SK-N-SH (cell line): ENCODE measurements at regions of chr1 and their contacts with region 1.

Region 1: DNA sequence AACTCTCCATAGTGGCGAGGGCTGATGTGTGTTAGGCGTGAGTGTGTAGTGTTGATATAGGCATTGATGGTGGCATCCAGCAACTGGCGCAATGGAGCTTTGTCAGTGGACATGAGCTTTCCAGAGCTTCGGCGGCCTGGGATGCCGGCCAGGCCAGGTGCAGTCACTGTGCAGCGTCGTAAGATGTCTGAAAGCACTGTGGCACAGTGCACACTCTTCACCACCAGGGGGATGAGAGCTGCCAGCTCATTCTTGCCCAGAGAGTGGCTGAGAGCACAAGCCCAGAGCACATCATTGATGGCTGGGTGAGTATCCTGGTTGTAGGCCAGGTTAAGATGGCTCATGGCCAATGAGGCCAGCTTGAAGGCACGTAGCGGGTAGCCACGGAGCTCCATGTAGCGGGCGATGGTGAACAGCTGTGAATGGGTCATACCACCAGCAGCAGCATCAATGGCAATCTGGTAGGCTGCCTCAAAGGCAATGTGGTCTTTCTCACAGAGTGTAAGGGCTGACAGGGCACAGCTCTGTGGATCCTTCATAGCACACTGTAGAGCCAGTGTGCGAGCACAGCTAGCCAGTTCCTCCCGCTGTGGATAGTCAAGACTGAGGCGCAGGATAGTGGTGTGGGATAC is 6.7 kb downstream of the UROD start:
- DNase-seq: peak; percentile 58
- H3K4me3 ChIP-seq: no peak overlapping the region
- H3K27ac ChIP-seq: no peak overlapping the region; a peak in 1 of 4 replicates
- H3K4me1 ChIP-seq: peaks cover 0 to 13% of the 10 kb centered on the region in 2 experiments; a peak in 1 of 4 replicates
- H3K27me3 ChIP-seq: no peaks in the 10 kb centered on the region
- CTCF ChIP-seq: peak; percentile 72
- EP300 ChIP-seq: no peak
- RAD21 ChIP-seq: peak; percentile 74

Region 2: DNA sequence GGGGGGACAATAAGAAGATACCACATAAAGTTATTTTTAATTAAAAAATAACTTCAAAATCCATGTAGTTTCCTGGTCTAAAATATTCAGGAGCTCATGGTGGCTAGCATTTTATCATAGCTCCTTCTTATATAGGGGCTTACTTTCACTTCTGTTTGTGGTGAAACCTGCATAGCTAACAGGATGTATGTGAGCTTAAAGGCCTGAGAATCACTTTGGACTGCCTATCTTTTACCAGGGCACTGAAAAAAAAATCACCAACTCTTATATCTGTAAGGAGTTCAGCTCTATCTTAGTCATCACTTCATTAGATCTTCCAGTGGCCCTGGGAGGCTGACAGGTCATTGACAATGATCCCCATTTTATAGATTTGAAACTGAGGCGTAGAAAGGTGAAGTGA is 14.6 kb after region 1 on chr1:
- CTCF ChIA-PET with region 1: interaction called, 11 read pairs
- POLR2A ChIA-PET with region 1: no interaction called
- DNase-seq: no peak
- H3K4me3 ChIP-seq: no peak overlapping the region
- H3K27ac ChIP-seq: no peak overlapping the region
- H3K4me1 ChIP-seq: no peaks in the 10 kb centered on the region
- H3K27me3 ChIP-seq: no peaks in the 10 kb centered on the region
- CTCF ChIP-seq: no peak
- EP300 ChIP-seq: no peak
- RAD21 ChIP-seq: no peak

Region 3: DNA sequence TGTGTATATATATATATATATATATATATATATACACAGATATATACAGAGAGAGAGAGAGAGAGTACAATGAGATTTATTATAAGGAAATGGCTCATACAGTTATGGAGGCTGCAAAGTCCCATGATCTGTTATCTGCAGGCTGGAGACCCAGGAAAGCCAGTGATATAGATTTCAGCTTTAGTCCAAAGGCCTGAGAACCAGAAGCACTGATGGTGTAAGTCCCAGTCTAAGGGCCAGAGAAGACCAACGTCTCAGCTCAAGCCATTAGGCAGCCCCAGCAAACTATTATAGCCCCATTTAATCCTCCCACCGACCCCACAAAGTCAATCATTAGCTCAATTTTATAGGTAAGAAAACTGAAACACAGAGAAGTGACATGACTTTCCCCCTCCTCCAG is 273.0 kb after region 1 on chr1:
- CTCF ChIA-PET with region 1: interaction called, 470 read pairs
- POLR2A ChIA-PET with region 1: no interaction called
- DNase-seq: no peak
- H3K4me3 ChIP-seq: no peak overlapping the region
- H3K27ac ChIP-seq: no peak overlapping the region
- H3K4me1 ChIP-seq: no peaks in the 10 kb centered on the region
- H3K27me3 ChIP-seq: no peaks in the 10 kb centered on the region
- CTCF ChIP-seq: no peak
- EP300 ChIP-seq: no peak
- RAD21 ChIP-seq: no peak

Region 4: GRCh38 chr1:45303582-45304310 is 285.0 kb after region 1 on chr1:
- CTCF ChIA-PET with region 1: interaction called, 470 read pairs
- POLR2A ChIA-PET with region 1: interaction called, 50 read pairs
- DNase-seq: peak; percentile 97
- H3K4me3 ChIP-seq: peak overlapping the region; percentile 68 to 78
- H3K27ac ChIP-seq: peak overlapping the region; percentile 77 to 87
- H3K4me1 ChIP-seq: peaks cover 0 to 13% of the 10 kb centered on the region in 2 experiments; a peak in 1 of 4 replicates
- H3K27me3 ChIP-seq: no peaks in the 10 kb centered on the region
- CTCF ChIP-seq: peak; percentile 74
- EP300 ChIP-seq: no peak
- RAD21 ChIP-seq: peak; percentile 60

Region 5: GRCh38 chr1:45490626-45491486 is 472.1 kb after region 1 on chr1 and contains the start of gene TESK2:
- CTCF ChIA-PET with region 1: interaction called, 30 read pairs
- POLR2A ChIA-PET with region 1: no interaction called
- DNase-seq: peak; percentile 98
- H3K4me3 ChIP-seq: peak within 1 kb of the TSS; percentile 68 to 98
- H3K27ac ChIP-seq: peak within 1 kb of the TSS in 1 of 2 experiments; percentile 47; a peak in 2 of 4 replicates
- H3K4me1 ChIP-seq: peaks cover 0 to 5% of the 10 kb centered on the region in 2 experiments; a peak in 2 of 4 replicates
- H3K27me3 ChIP-seq: no peaks in the 10 kb centered on the region
- CTCF ChIP-seq: no peak
- EP300 ChIP-seq: no peak
- RAD21 ChIP-seq: no peak
- polyA plus RNA-seq, gene TESK2: 1.3 TPM in 2 replicates